ENCODE measurements at regions of chr7 and their contacts with region 1.

Region 1: DNA sequence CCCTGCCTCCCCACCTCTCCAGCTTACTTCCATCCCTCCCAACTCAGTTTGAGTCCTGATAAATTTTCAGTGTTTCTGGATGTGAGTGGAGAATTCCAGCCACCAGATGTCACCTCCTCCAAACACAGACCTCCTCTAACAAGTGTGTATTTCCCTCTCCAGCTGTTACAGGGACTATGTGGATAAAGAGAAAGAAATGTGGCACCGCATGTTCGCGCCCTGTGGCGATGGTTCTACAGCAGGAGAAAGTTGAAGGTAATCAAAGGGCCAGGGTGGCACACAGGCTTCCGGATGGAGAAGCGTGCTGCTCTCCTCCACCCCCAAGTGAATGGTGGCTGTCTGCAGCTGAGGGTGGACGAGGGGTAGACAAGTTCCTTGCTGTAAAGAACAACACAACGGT is 14.7 kb downstream of the FKBP6 start:
- DNase-seq: peak; percentile 38
- H3K4me3 ChIP-seq: no peak overlapping the region
- H3K27ac ChIP-seq: no peak overlapping the region
- H3K4me1 ChIP-seq: no peaks in the 10 kb centered on the region
- H3K27me3 ChIP-seq: no peaks in the 10 kb centered on the region
- CTCF ChIP-seq: peak; percentile 16 to 59

Region 2: GRCh38 chr7:73397521-73398281 is 55.1 kb after region 1 on chr7:
- CTCF ChIA-PET with region 1: no interaction called
- dilution Hi-C with region 1: loop called (anchors 5 kb)
- in situ Hi-C with region 1: no loop called
- intact Hi-C with region 1: loop called (anchors 10 kb)
- DNase-seq: no peak
- H3K4me3 ChIP-seq: no peak overlapping the region
- H3K27ac ChIP-seq: no peak overlapping the region
- H3K4me1 ChIP-seq: no peaks in the 10 kb centered on the region
- H3K27me3 ChIP-seq: no peaks in the 10 kb centered on the region
- CTCF ChIP-seq: no peak

Region 3: GRCh38 chr7:73451780-73452398 is 109.2 kb after region 1 on chr7:
- CTCF ChIA-PET with region 1: interaction called, 8 read pairs
- dilution Hi-C with region 1: no loop called
- in situ Hi-C with region 1: no loop called
- intact Hi-C with region 1: loop called (anchors 1 kb)
- DNase-seq: peak; percentile 24
- H3K4me3 ChIP-seq: no peak overlapping the region
- H3K27ac ChIP-seq: no peak overlapping the region
- H3K4me1 ChIP-seq: no peaks in the 10 kb centered on the region
- H3K27me3 ChIP-seq: no peaks in the 10 kb centered on the region
- CTCF ChIP-seq: peak; percentile 97 to 100

Region 4: GRCh38 chr7:73738612-73739374 is 396.1 kb after region 1 on chr7 and contains the start of gene ABHD11:
- CTCF ChIA-PET with region 1: no interaction called
- dilution Hi-C with region 1: no loop called
- in situ Hi-C with region 1: no loop called
- intact Hi-C with region 1: loop called (anchors 5 kb)
- DNase-seq: peak; percentile 96
- H3K4me3 ChIP-seq: peak within 1 kb of the TSS; percentile 59 to 84 (median 73)
- H3K27ac ChIP-seq: peak within 1 kb of the TSS; percentile 82
- H3K4me1 ChIP-seq: peaks cover 9% of the 10 kb centered on the region
- H3K27me3 ChIP-seq: no peaks in the 10 kb centered on the region
- CTCF ChIP-seq: no peak
- total RNA-seq, gene ABHD11: 6.7 to 23.6 TPM